Activated T-helper 1 cell treated with anti-CD3 and anti-CD28 coated beads, Interleukin-12 subunit alpha, Interleukin-12 subunit beta, Interleukin-2, Interleukin-4 antibody, amounts not matched to agents 30 ng/mL and 10 ng/mL and 1 ng/mL, durations not matched to agents 14 hours and 24 hours and 36 hours (primary cell): ENCODE measurements at regions of chr18 and their contacts with region 1.

Region 1: GRCh38 chr18:23532848-23533247 is 29.5 kb downstream of the RMC1 start:
- DNase-seq: no peak
- H3K4me3 Mint-ChIP-seq: no peak overlapping the region
- H3K27ac Mint-ChIP-seq: no peak overlapping the region
- H3K4me1 Mint-ChIP-seq: peaks cover 14% of the 10 kb centered on the region
- H3K27me3 Mint-ChIP-seq: no peaks in the 10 kb centered on the region

Region 2: DNA sequence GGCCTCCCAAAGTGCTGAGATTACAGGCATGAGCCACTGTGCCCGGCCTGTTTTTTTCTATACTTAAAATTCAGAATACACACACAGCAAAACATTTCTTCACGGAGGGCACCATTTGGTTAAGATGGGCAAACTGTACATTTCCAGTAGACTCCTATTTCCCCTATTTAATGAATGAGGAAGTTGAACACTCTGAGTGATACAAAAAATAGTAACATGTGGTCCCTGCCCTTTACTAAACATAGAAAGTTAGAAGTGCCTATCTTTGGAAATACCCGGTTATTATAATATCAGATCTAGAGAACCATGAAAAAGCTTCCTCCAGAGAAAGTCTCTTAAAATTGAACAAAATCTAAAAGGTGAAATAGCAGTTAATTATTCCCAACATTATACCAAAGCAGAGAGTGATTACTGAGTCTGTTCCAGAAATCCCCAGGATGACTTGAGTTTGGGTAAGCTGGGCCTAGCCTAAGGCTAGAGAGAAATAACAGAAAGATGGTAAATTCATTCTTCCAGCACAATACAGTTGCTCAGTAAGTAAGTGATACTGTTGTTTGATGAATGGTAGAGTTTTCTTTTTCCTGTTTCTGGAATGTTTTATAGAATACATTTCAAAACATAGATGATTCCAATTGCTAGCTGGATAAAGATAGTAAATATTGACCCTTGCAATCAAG is 52.9 kb before region 1 on chr18:
- intact Hi-C with region 1: loop called (anchors 10 kb)
- DNase-seq: no peak
- H3K4me3 Mint-ChIP-seq: no peak overlapping the region
- H3K27ac Mint-ChIP-seq: no peak overlapping the region
- H3K4me1 Mint-ChIP-seq: peaks cover 4% of the 10 kb centered on the region
- H3K27me3 Mint-ChIP-seq: no peaks in the 10 kb centered on the region

Region 3: GRCh38 chr18:23593720-23594119 is 60.9 kb after region 1 on chr18:
- intact Hi-C with region 1: no loop called
- DNase-seq: no peak
- H3K4me3 Mint-ChIP-seq: no peak overlapping the region
- H3K27ac Mint-ChIP-seq: no peak overlapping the region
- H3K4me1 Mint-ChIP-seq: peaks cover 15% of the 10 kb centered on the region
- H3K27me3 Mint-ChIP-seq: peaks cover 10% of the 10 kb centered on the region